CD4-positive, alpha-beta T cell (primary cell): ENCODE measurements at regions of chr17 and their contacts with region 1.

Region 1: DNA sequence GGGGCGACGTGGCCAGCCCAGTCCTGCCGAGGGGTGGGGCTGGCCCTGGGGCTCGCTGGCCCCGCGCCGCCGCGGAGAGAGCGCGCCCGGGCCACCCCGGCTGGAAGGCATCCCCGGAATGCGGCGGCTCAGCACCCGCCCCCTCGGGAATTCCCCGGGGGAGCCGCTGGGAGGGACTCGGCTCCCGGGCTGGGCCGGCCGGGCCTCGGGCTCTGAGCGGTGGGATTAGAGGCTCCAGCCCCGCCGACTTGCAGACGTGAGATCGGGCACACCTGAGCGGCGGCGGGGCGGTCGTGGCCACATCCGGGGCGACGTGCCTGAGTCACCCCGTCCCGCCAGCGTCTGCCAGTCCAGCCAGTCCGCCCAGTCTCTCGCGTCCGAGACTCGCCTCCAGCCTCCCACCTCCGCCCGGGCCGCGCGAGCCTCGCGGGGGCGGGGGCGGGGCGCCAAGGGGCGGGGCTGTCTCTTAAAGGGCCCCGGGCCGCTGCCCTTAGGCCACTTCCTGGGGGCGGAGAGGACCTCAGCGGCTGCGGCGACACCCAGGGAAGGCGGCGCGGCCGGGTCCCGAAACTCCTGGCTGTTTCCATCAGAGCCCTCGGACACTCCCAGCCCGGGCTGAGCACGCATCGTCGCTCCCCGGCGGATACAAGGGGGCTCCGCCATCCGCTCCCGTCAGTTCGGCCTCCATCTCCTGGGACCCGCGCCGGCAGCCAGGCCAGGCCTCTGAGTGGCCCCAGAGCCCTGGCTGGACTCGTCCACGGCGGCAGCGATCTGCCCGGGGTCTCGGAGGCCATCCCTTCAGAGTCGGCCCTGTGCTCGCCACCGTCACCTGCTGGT is at the start of gene KCTD11:
- DNase-seq: peak; percentile 45 to 91 (median 70)
- ATAC-seq: peak; percentile 58
- H3K4me3 ChIP-seq: peak within 1 kb of the TSS; percentile 66
- H3K4me3 Mint-ChIP-seq: peak within 1 kb of the TSS; percentile 90
- H3K27ac ChIP-seq: peak within 1 kb of the TSS; percentile 69 to 75
- H3K27ac Mint-ChIP-seq: peak within 1 kb of the TSS; percentile 86
- H3K4me1 ChIP-seq: peaks cover 59% of the 10 kb centered on the region
- H3K4me1 Mint-ChIP-seq: peaks cover 49% of the 10 kb centered on the region
- H3K27me3 ChIP-seq: no peaks in the 10 kb centered on the region
- H3K27me3 Mint-ChIP-seq: no peaks in the 10 kb centered on the region
- CTCF ChIP-seq: no peak
- total RNA-seq, gene KCTD11: 1.3 to 1.6 TPM

Region 2: GRCh38 chr17:7280519-7281429 is 71.1 kb before region 1 on chr17:
- CTCF ChIA-PET with region 1: interaction called, 4 read pairs
- POLR2A ChIA-PET with region 1: interaction called, 5 read pairs
- intact Hi-C with region 1: loop called in 1 of 2 experiments (anchors 1 kb)
- DNase-seq: peak; percentile 77 to 93 (median 84)
- ATAC-seq: peak; percentile 90
- H3K4me3 ChIP-seq: peak overlapping the region; percentile 53
- H3K4me3 Mint-ChIP-seq: peak overlapping the region; percentile 85
- H3K27ac ChIP-seq: no peak overlapping the region
- H3K27ac Mint-ChIP-seq: peak overlapping the region; percentile 42
- H3K4me1 ChIP-seq: peaks cover 28% of the 10 kb centered on the region
- H3K4me1 Mint-ChIP-seq: peaks cover 26% of the 10 kb centered on the region
- H3K27me3 ChIP-seq: peaks cover 33 to 47% of the 10 kb centered on the region in 2 experiments
- H3K27me3 Mint-ChIP-seq: peaks cover 28% of the 10 kb centered on the region
- CTCF ChIP-seq: peak; percentile 86

Region 3: GRCh38 chr17:7329374-7329996 is 22.4 kb before region 1 on chr17:
- CTCF ChIA-PET with region 1: interaction called, 6 read pairs
- POLR2A ChIA-PET with region 1: interaction called, 96 read pairs
- intact Hi-C with region 1: loop called (anchors 2 kb)
- DNase-seq: peak; percentile 90 to 99 (median 94)
- ATAC-seq: peak; percentile 73
- H3K4me3 ChIP-seq: peak overlapping the region; percentile 64
- H3K4me3 Mint-ChIP-seq: peak overlapping the region; percentile 90
- H3K27ac ChIP-seq: peak overlapping the region; percentile 80 to 92
- H3K27ac Mint-ChIP-seq: peak overlapping the region; percentile 88
- H3K4me1 ChIP-seq: peaks cover 58% of the 10 kb centered on the region
- H3K4me1 Mint-ChIP-seq: peaks cover 47% of the 10 kb centered on the region
- H3K27me3 ChIP-seq: no peaks in the 10 kb centered on the region
- H3K27me3 Mint-ChIP-seq: no peaks in the 10 kb centered on the region
- CTCF ChIP-seq: no peak

Region 4: GRCh38 chr17:7403977-7404736 is 52.3 kb after region 1 on chr17 and contains the start of gene TMEM256:
- CTCF ChIA-PET with region 1: interaction called, 5 read pairs
- POLR2A ChIA-PET with region 1: interaction called, 6 read pairs
- intact Hi-C with region 1: loop called in 1 of 2 experiments (anchors 10 kb)
- DNase-seq: peak; percentile 90 to 99 (median 94)
- ATAC-seq: peak; percentile 88
- H3K4me3 ChIP-seq: peak within 1 kb of the TSS; percentile 77
- H3K4me3 Mint-ChIP-seq: peak within 1 kb of the TSS; percentile 98
- H3K27ac ChIP-seq: peak within 1 kb of the TSS in 1 of 2 donors; percentile 82
- H3K27ac Mint-ChIP-seq: peak within 1 kb of the TSS; percentile 87
- H3K4me1 ChIP-seq: peaks cover 36% of the 10 kb centered on the region
- H3K4me1 Mint-ChIP-seq: peaks cover 31% of the 10 kb centered on the region
- H3K27me3 ChIP-seq: peaks cover 0 to 5% of the 10 kb centered on the region in 2 experiments
- H3K27me3 Mint-ChIP-seq: no peaks in the 10 kb centered on the region
- CTCF ChIP-seq: no peak
- total RNA-seq, gene TMEM256: 29.0 to 29.4 TPM

Region 5: GRCh38 chr17:7502987-7503386 is 151.1 kb after region 1 on chr17:
- CTCF ChIA-PET with region 1: no interaction called
- POLR2A ChIA-PET with region 1: no interaction called
- intact Hi-C with region 1: loop called in 1 of 2 experiments (anchors 5 kb)
- DNase-seq: peak in 4 of 14 experiments; percentile 21 to 42 (median 34)
- ATAC-seq: peak; percentile 39
- H3K4me3 ChIP-seq: no peak overlapping the region
- H3K4me3 Mint-ChIP-seq: no peak overlapping the region
- H3K27ac ChIP-seq: no peak overlapping the region
- H3K27ac Mint-ChIP-seq: no peak overlapping the region
- H3K4me1 ChIP-seq: no peaks in the 10 kb centered on the region
- H3K4me1 Mint-ChIP-seq: no peaks in the 10 kb centered on the region
- H3K27me3 ChIP-seq: no peaks in the 10 kb centered on the region
- H3K27me3 Mint-ChIP-seq: no peaks in the 10 kb centered on the region
- CTCF ChIP-seq: no peak

Region 6: GRCh38 chr17:7589204-7589868 is 237.5 kb after region 1 on chr17:
- CTCF ChIA-PET with region 1: interaction called, 8 read pairs
- POLR2A ChIA-PET with region 1: interaction called, 5 read pairs
- intact Hi-C with region 1: loop called (anchors 1 kb)
- DNase-seq: peak; percentile 47 to 87 (median 62)
- ATAC-seq: peak; percentile 90
- H3K4me3 ChIP-seq: no peak overlapping the region
- H3K4me3 Mint-ChIP-seq: no peak overlapping the region
- H3K27ac ChIP-seq: no peak overlapping the region
- H3K27ac Mint-ChIP-seq: no peak overlapping the region
- H3K4me1 ChIP-seq: peaks cover 31% of the 10 kb centered on the region
- H3K4me1 Mint-ChIP-seq: peaks cover 7% of the 10 kb centered on the region
- H3K27me3 ChIP-seq: no peaks in the 10 kb centered on the region
- H3K27me3 Mint-ChIP-seq: no peaks in the 10 kb centered on the region
- CTCF ChIP-seq: peak; percentile 76

Region 7: GRCh38 chr17:7803981-7804380 is 452.1 kb after region 1 on chr17:
- CTCF ChIA-PET with region 1: no interaction called
- POLR2A ChIA-PET with region 1: no interaction called
- intact Hi-C with region 1: no loop called
- DNase-seq: no peak
- ATAC-seq: no peak
- H3K4me3 ChIP-seq: no peak overlapping the region
- H3K4me3 Mint-ChIP-seq: no peak overlapping the region
- H3K27ac ChIP-seq: no peak overlapping the region
- H3K27ac Mint-ChIP-seq: no peak overlapping the region
- H3K4me1 ChIP-seq: no peaks in the 10 kb centered on the region
- H3K4me1 Mint-ChIP-seq: no peaks in the 10 kb centered on the region
- H3K27me3 ChIP-seq: peaks cover 0 to 3% of the 10 kb centered on the region in 2 experiments
- H3K27me3 Mint-ChIP-seq: peaks cover 20% of the 10 kb centered on the region
- CTCF ChIP-seq: no peak